Naive thymus-derived CD4-positive, alpha-beta T cell (primary cell): ENCODE measurements at regions of chr19 and their contacts with region 1.

Region 1: GRCh38 chr19:45886427-45887199 is 672 bp upstream of the IRF2BP1 start:
- DNase-seq: peak; percentile 76 to 93 (median 88)
- ATAC-seq: peak; percentile 85
- H3K4me3 ChIP-seq: peak overlapping the region; percentile 99
- H3K4me3 Mint-ChIP-seq: peak overlapping the region; percentile 93 to 99 (median 97)
- H3K27ac ChIP-seq: peak overlapping the region; percentile 86
- H3K27ac Mint-ChIP-seq: peak overlapping the region; percentile 92 to 99 (median 97)
- H3K4me1 ChIP-seq: peaks cover 15 to 34% of the 10 kb centered on the region in 2 donors
- H3K4me1 Mint-ChIP-seq: peaks cover 10 to 32% (median 19%) of the 10 kb centered on the region in 7 donors
- H3K27me3 ChIP-seq: no peaks in the 10 kb centered on the region
- H3K27me3 Mint-ChIP-seq: no peaks in the 10 kb centered on the region

Region 2: DNA sequence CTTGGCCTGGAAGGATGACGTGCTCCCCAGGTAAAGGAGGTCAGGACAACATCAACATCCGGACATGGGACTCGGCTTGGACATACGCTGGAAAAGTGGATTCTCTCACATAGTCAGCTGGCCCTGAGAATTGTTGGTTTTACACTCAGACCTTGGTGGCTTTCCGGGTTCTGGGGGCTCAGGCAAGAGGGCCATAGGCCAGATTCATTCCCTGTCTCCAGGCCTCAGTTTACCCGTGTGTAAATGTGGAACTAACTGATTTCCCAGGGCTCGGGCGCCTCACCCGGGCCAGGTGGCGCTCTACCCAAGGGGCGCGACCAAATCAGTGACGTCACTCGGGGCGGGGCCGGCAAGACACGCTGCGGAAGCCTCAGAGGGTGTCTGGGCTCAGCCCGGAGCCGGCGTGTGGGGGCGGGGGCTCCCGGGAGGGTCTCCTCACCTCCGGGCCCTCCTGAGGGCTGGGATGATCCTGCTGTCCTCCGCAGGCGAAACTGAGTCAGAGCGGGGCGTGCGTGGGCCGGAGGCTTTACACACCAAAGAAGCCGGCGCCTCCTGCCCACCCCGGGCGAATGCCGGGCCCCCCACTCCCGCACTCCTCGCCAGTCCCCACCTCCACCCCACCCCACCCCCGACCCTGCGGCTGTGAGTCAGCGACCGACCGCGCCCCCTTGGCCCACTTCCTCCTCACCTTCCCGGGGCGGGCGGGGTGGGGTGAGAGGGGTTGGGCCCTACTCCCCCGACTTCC is 380.2 kb before region 1 on chr19:
- CTCF ChIA-PET with region 1: no interaction called
- POLR2A ChIA-PET with region 1: no interaction called
- intact Hi-C with region 1: loop called in 1 of 2 experiments (anchors 1 kb)
- DNase-seq: peak; percentile 95 to 99 (median 98)
- ATAC-seq: peak; percentile 88
- H3K4me3 ChIP-seq: peak overlapping the region; percentile 99
- H3K4me3 Mint-ChIP-seq: peak overlapping the region; percentile 91 to 96 (median 94)
- H3K27ac ChIP-seq: peak overlapping the region; percentile 87
- H3K27ac Mint-ChIP-seq: peak overlapping the region; percentile 91 to 98 (median 97)
- H3K4me1 ChIP-seq: peaks cover 14 to 20% of the 10 kb centered on the region in 2 donors
- H3K4me1 Mint-ChIP-seq: peaks cover 29 to 46% (median 34%) of the 10 kb centered on the region in 7 donors
- H3K27me3 ChIP-seq: no peaks in the 10 kb centered on the region
- H3K27me3 Mint-ChIP-seq: no peaks in the 10 kb centered on the region

Region 3: GRCh38 chr19:45730389-45731288 is 156.0 kb before region 1 on chr19 and contains the start of gene FBXO46:
- CTCF ChIA-PET with region 1: no interaction called
- POLR2A ChIA-PET with region 1: no interaction called
- intact Hi-C with region 1: loop called (anchors 1 to 2 kb)
- DNase-seq: peak; percentile 74 to 94 (median 90)
- ATAC-seq: peak; percentile 99
- H3K4me3 ChIP-seq: peak within 1 kb of the TSS; percentile 96
- H3K4me3 Mint-ChIP-seq: peak within 1 kb of the TSS; percentile 85 to 98 (median 92)
- H3K27ac ChIP-seq: peak within 1 kb of the TSS; percentile 92
- H3K27ac Mint-ChIP-seq: peak within 1 kb of the TSS; percentile 60 to 93 (median 91)
- H3K4me1 ChIP-seq: peaks cover 6 to 14% of the 10 kb centered on the region in 2 donors
- H3K4me1 Mint-ChIP-seq: peaks cover 27 to 41% (median 33%) of the 10 kb centered on the region in 7 donors
- H3K27me3 ChIP-seq: no peaks in the 10 kb centered on the region
- H3K27me3 Mint-ChIP-seq: peaks cover 0 to under 1% (median 0%) of the 10 kb centered on the region in 5 donors
- total RNA-seq, gene FBXO46: 21.2 to 52.9 (median 36.6) TPM

Region 4: GRCh38 chr19:45817010-45817724 is 69.4 kb before region 1 on chr19:
- CTCF ChIA-PET with region 1: interaction called, 12 read pairs
- POLR2A ChIA-PET with region 1: no interaction called
- intact Hi-C with region 1: loop called (anchors 1 kb)
- DNase-seq: peak; percentile 88 to 96 (median 93)
- ATAC-seq: peak; percentile 100
- H3K4me3 ChIP-seq: no peak overlapping the region
- H3K4me3 Mint-ChIP-seq: peak overlapping the region in 5 of 10 donors; percentile 16 to 54 (median 45)
- H3K27ac ChIP-seq: no peak overlapping the region
- H3K27ac Mint-ChIP-seq: peak overlapping the region in 7 of 9 donors; percentile 25 to 93 (median 42)
- H3K4me1 ChIP-seq: peaks cover 0 to 4% of the 10 kb centered on the region in 2 donors
- H3K4me1 Mint-ChIP-seq: peaks cover 0 to 7% (median 5%) of the 10 kb centered on the region in 7 donors
- H3K27me3 ChIP-seq: no peaks in the 10 kb centered on the region
- H3K27me3 Mint-ChIP-seq: peaks cover 0 to 20% (median 17%) of the 10 kb centered on the region in 5 donors

Region 5: DNA sequence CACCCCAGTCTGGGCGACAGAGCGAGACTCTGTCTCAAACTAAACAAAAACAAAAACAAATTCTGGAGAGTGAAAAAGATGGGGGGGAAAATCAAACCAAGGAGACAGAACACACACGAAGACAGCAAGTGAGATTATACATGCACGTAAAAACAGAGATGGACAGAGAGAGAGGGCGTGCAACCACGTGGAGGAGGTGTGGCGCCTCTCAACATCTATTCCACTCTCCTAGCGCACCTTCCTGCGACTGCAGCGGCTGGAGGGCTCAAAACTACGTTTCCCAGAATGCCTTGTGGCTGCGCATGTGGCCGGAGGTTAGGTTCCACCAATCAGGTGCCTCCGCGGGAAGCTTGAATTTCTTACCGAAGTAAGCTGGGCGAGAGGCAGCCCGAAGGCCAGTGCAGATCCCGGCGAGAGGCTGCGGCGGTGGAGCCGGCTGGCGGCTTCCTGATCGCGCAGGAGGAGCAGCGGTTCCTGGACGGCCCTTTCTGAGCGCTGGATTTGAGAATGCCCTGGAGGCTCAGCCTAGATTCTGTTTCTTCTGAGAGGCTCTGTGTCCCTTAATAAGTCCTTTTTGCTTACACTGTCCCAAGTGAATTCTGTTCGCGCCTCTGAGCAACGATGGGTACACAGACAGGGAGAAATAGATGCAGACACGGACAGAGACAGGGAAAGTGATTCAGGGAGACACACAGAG is 41.1 kb after region 1 on chr19:
- CTCF ChIA-PET with region 1: no interaction called
- POLR2A ChIA-PET with region 1: no interaction called
- intact Hi-C with region 1: loop called (anchors 1 kb)
- DNase-seq: peak; percentile 66 to 89 (median 87)
- ATAC-seq: peak; percentile 99
- H3K4me3 ChIP-seq: no peak overlapping the region
- H3K4me3 Mint-ChIP-seq: peak overlapping the region in 7 of 10 donors; percentile 10 to 86 (median 55)
- H3K27ac ChIP-seq: no peak overlapping the region
- H3K27ac Mint-ChIP-seq: peak overlapping the region in 4 of 9 donors; percentile 28 to 60 (median 42)
- H3K4me1 ChIP-seq: peaks cover 4 to 5% of the 10 kb centered on the region in 2 donors
- H3K4me1 Mint-ChIP-seq: peaks cover 4 to 23% (median 6%) of the 10 kb centered on the region in 7 donors
- H3K27me3 ChIP-seq: no peaks in the 10 kb centered on the region
- H3K27me3 Mint-ChIP-seq: peaks cover 0 to 15% (median 9%) of the 10 kb centered on the region in 5 donors

Region 6: DNA sequence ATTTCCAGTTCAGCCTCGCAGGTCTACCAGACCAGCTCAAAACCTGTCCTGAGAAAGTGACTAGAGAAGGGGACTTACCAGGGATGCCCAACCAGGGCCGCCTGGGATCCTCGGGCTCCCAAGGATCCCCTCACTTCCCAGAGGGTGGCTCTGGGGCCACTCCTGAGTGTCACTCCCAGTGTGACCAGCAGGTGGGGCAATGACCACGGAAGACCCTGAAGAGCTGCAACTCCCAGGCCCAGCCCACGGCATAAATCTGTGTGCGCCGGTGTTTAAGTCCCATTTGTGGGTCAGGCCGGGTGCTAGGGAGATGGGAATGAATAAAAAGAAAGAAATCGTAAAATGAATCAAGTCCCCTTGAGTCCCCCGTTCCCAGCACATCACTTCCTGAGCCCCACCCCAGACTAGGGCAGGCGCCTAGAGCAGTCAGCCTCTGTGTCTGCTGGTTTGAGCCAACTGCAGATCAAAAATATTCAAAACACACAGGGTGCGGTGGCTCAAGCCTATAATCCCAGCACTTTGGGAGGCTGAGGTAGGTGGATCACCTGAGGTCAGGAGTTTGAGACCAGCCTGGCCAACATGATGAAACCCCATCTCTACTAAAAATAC is 727.6 kb after region 1 on chr19:
- CTCF ChIA-PET with region 1: no interaction called
- POLR2A ChIA-PET with region 1: no interaction called
- intact Hi-C with region 1: loop called in 1 of 2 experiments (anchors 10 kb)
- DNase-seq: peak in 8 of 9 donors; percentile 70 to 83 (median 77)
- ATAC-seq: peak; percentile 79
- H3K4me3 ChIP-seq: no peak overlapping the region
- H3K4me3 Mint-ChIP-seq: peak overlapping the region; percentile 40 to 77 (median 71)
- H3K27ac ChIP-seq: peak overlapping the region; percentile 65
- H3K27ac Mint-ChIP-seq: peak overlapping the region; percentile 79 to 93 (median 89)
- H3K4me1 ChIP-seq: peaks cover 24 to 84% of the 10 kb centered on the region in 2 donors
- H3K4me1 Mint-ChIP-seq: peaks cover 55 to 85% (median 77%) of the 10 kb centered on the region in 7 donors
- H3K27me3 ChIP-seq: no peaks in the 10 kb centered on the region
- H3K27me3 Mint-ChIP-seq: no peaks in the 10 kb centered on the region